Right ventricle myocardium inferior (tissue), 1 donor: ENCODE measurements at regions of chr18 and their contacts with region 1.

Region 1: DNA sequence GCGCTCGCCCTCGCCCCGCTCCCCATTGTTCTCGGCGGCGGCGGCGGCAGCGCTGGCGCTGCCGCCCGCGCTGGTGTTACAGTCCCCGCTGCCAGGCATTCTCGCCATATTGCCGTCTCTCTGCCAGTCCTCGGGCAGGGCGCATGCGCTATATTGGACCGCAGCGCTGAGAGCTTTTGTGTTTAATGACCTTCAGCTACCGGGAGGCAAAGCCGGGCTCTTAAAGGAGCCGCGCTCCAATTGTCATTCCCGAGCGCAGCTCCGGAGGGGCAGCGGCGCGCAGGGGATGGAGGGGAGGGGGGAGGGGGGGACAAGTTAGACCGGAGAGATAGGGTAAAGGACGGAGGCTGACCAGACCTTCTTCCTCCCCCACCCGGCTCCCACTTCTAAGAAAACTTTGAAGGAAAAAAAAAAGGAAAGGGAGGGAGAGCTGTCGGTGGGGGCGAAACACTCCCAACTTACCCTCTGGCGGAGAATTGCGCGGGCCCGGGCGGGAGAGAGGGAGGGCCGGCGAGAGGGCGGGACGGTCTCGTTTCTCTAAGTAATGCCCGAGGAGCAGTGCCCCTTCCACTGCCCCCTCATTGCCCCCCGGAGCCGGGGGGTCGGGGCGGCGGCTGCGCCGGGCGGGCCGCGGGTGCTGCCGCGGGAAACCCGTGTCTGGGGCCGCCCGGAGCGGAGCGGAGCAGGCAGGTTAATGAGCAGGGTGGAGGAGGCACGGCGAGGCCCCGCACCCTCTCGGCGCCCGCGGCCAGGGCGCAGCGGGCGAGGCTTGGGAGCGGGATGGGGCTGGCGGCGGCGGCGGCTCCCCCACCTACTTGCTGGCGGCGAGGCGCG is at the start of gene KCTD1:
- DNase-seq: peak; percentile 90
- ATAC-seq: peak; percentile 62
- total RNA-seq, gene KCTD1: 15.4 TPM

Region 2: GRCh38 chr18:26383454-26384270 is 165.0 kb before region 1 on chr18:
- intact Hi-C with region 1: loop called (anchors 5 kb)
- DNase-seq: no peak
- ATAC-seq: peak; percentile 48

Region 3: GRCh38 chr18:26460449-26461091 is 88.1 kb before region 1 on chr18:
- intact Hi-C with region 1: loop called (anchors 5 kb)
- DNase-seq: no peak
- ATAC-seq: peak; percentile 88

Region 4: DNA sequence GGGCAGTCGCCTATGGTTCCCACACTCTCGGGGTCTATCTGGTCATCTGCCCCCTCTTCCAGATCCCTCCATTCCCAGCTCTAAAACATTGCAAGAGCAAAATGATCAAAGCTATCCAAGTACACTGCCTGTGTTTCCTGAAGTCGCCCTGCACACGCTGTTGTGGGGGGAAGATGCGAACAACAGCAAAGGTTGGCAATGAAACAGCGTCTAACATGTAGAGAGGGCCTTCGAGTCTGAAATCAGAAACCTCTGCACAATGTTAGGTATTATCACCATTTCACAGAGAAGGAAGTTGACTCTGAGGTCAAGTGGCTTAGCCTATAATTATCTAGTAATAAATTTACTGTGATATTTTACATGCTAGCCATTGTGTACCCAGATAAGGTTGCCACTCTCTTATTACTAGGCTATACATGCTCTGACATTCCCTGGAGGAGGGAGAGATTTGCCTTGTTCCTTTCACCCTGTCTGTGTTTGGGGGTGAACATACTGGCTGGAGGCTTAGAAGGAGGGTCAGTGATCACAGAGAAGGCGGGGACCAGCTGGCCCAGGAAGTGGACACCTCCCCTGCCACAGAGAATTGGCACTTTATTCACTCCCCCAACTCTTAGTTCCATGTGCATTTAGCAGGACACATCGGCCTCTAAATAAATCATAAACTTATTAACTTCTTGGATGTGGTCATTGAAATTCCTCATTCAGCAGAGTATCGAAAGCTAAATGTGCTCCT is 37.1 kb before region 1 on chr18:
- intact Hi-C with region 1: loop called (anchors 5 kb)
- DNase-seq: no peak
- ATAC-seq: peak; percentile 58

Region 5: DNA sequence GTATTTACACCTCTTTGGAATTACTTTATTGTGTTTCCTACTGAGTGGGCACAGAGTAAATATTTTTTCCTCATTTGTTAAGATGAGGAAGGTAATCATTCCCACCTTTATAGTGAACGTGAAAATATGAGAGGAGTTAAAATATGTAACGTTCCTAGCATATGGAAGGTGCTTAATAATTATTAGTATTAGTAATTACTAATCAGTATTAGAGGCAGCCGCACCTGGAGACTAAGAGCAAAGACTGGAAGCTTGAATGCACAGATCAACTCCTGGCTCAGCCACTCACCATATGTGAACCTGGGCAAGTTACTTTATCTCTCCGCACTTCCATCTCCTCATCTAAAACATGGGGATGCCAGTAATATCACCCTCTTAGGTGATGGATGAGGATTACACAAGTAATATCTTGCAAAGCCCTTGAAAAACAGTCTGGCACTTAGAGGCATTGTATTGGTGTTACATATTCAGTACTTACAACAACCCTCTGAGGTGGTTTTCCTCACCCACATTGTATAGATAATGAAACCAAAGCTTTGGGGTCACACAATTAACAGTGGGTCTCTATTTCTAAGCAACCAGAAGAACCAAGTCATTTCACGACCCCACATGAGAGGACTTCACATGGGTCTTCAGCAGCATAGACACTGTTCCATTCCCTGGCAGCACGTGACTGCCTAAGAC is 100.0 kb after region 1 on chr18:
- intact Hi-C with region 1: loop called (anchors 2 kb)
- DNase-seq: no peak
- ATAC-seq: no peak